ENCODE measurements at regions of chr6 and their contacts with region 1.

Region 1: GRCh38 chr6:116217069-116217468 is 36.8 kb downstream of the TSPYL4 start:
- DNase-seq: no peak

Region 2: DNA sequence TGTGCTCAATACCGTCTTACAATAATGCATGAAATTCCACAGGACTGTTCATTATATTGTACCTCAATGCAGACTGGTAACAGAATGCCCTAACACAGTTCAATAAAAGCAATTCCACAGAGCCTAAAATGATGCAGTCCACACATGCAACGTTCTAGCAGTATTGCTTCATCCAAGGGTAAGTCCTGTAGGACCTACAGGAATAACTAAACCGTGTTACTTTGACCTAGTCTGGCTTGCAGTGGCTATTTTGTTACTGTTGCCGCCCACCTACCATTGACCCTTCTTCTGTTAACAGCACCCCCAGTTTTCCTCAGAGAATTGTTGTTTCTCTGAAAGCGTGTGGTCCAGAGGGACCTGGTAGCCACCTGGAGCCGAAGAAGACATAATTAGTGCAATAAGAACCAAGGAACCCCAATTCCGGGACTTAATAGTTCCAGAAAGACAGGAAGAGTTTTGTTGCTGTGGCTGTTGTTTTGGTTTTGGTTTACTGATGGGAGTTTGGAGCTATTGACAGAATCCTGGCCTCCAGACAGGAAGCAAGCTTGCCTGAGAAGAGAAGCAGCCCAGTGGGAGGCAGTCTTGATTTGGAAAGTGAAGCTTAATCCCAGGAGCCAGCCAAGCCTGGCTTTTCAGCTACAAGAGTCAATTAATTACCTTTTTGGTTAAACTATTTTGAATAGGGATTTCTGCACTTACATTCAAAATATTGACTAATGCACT is 247.7 kb before region 1 on chr6:
- intact Hi-C with region 1: no loop called
- DNase-seq: peak in 7 of 10 donors; percentile 12 to 85 (median 42)

Region 3: GRCh38 chr6:116111552-116112528 is 105.2 kb before region 1 on chr6:
- intact Hi-C with region 1: loop called (anchors 10 kb)
- DNase-seq: peak in 1 of 10 donors; percentile 37

Region 4: GRCh38 chr6:116180374-116180773 is 36.7 kb before region 1 on chr6:
- intact Hi-C with region 1: no loop called
- DNase-seq: no peak

Region 5: GRCh38 chr6:116268589-116269293 is 51.7 kb after region 1 on chr6:
- intact Hi-C with region 1: loop called (anchors 10 kb)
- DNase-seq: no peak